Natural killer cell (primary cell): ENCODE measurements at regions of chr9 and their contacts with region 1.

Region 1: GRCh38 chr9:121059998-121060636 is 10.0 kb upstream of the C5 start:
- DNase-seq: peak in 1 of 2 donors; percentile 77
- ATAC-seq: peak in 2 of 3 donors; percentile 44 to 57
- H3K4me3 ChIP-seq: no peak overlapping the region
- H3K4me3 Mint-ChIP-seq: no peak overlapping the region
- H3K27ac ChIP-seq: no peak overlapping the region
- H3K27ac Mint-ChIP-seq: no peak overlapping the region
- H3K4me1 ChIP-seq: no peaks in the 10 kb centered on the region
- H3K4me1 Mint-ChIP-seq: no peaks in the 10 kb centered on the region
- H3K27me3 ChIP-seq: no peaks in the 10 kb centered on the region
- H3K27me3 Mint-ChIP-seq: peaks cover 0 to 3% of the 10 kb centered on the region in 2 donors
- CTCF ChIP-seq: peak; percentile 76

Region 2: GRCh38 chr9:120755827-120756434 is 304.2 kb before region 1 on chr9:
- intact Hi-C with region 1: loop called (anchors 1 kb)
- DNase-seq: peak; percentile 51 to 85
- ATAC-seq: peak; percentile 69 to 85 (median 74)
- H3K4me3 ChIP-seq: no peak overlapping the region
- H3K4me3 Mint-ChIP-seq: no peak overlapping the region
- H3K27ac ChIP-seq: no peak overlapping the region
- H3K27ac Mint-ChIP-seq: peak overlapping the region in 1 of 2 donors; percentile 36
- H3K4me1 ChIP-seq: no peaks in the 10 kb centered on the region
- H3K4me1 Mint-ChIP-seq: peaks cover 0 to 5% of the 10 kb centered on the region in 2 donors
- H3K27me3 ChIP-seq: no peaks in the 10 kb centered on the region
- H3K27me3 Mint-ChIP-seq: no peaks in the 10 kb centered on the region
- CTCF ChIP-seq: peak; percentile 93

Region 3: GRCh38 chr9:120904061-120904977 is 155.8 kb before region 1 on chr9:
- intact Hi-C with region 1: no loop called
- DNase-seq: peak in 1 of 2 donors; percentile 90
- ATAC-seq: peak; percentile 43 to 58 (median 50)
- H3K4me3 ChIP-seq: no peak overlapping the region
- H3K4me3 Mint-ChIP-seq: no peak overlapping the region
- H3K27ac ChIP-seq: peak overlapping the region; percentile 58
- H3K27ac Mint-ChIP-seq: peak overlapping the region; percentile 43 to 59
- H3K4me1 ChIP-seq: peaks cover 56% of the 10 kb centered on the region
- H3K4me1 Mint-ChIP-seq: peaks cover 16 to 34% of the 10 kb centered on the region in 2 donors
- H3K27me3 ChIP-seq: no peaks in the 10 kb centered on the region
- H3K27me3 Mint-ChIP-seq: no peaks in the 10 kb centered on the region
- CTCF ChIP-seq: no peak

Region 4: DNA sequence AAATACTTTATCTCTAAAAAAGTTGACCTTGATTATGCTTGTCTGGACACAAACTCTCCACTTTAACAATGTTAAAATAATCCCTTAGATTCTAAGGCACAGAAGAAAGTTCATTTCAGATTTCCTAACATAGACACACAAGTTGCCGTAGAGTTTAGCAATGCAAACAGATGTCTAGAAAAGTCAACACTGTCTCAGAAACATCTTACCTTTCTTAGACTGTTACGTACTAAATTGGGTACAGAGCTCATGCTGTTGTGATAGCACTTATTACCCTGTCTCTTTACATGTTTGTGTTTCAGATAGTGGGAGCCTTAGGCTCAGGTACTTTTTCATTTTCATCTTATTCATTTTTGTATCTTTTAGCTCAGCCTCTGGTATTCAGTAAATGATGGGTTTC is 62.0 kb before region 1 on chr9:
- intact Hi-C with region 1: no loop called
- DNase-seq: no peak
- ATAC-seq: no peak
- H3K4me3 ChIP-seq: no peak overlapping the region
- H3K4me3 Mint-ChIP-seq: no peak overlapping the region
- H3K27ac ChIP-seq: no peak overlapping the region
- H3K27ac Mint-ChIP-seq: no peak overlapping the region
- H3K4me1 ChIP-seq: no peaks in the 10 kb centered on the region
- H3K4me1 Mint-ChIP-seq: no peaks in the 10 kb centered on the region
- H3K27me3 ChIP-seq: no peaks in the 10 kb centered on the region
- H3K27me3 Mint-ChIP-seq: no peaks in the 10 kb centered on the region
- CTCF ChIP-seq: no peak

Region 5: DNA sequence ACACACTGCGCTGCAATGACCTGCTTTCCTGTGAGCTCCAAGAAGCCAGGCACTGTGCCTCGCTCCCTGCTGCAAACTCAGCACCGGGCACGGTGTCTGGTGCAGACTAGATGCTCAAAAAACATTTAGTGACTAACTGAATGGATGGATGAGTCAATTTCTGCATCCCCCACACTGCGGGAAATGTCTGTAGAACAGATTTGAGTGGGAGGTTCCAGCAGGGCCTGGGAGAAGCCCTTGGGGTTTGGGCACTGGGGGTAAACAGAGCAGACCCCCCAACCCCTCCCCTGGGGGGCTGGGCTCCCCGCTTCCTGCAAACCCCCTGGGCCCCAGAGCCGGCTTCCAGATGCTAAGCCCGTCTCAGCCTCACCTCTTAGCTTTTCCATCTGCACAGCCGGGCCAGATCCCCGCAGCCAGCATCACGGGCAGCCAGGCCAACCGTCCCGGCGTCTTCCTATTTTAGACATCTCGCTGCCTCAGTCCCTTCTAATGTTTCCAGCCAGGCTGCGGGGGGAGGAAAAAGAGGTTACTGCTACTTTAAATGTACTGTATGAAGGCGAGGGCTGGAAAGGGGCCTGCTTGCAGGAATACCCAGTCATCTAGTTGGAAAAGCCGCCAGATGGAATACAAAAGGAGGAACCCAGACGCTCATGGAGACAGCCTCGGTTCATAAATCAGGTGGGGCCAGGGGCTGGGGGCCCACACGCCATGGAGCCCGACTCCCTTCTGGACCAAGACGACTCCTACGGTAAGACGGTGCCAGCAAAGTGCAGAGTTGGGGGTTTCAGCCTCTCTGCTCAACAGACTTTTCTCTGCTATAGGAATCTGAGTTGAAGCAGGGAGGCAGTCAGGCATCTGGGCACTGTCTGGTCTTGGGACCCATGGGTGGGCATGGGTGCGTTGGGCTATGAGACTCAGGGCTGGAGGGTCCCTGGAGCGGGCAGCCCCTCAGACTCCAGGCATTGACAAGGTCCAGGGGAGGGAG is 506.7 kb after region 1 on chr9:
- intact Hi-C with region 1: no loop called
- DNase-seq: no peak
- ATAC-seq: no peak
- H3K4me3 ChIP-seq: no peak overlapping the region
- H3K4me3 Mint-ChIP-seq: no peak overlapping the region
- H3K27ac ChIP-seq: no peak overlapping the region
- H3K27ac Mint-ChIP-seq: no peak overlapping the region
- H3K4me1 ChIP-seq: no peaks in the 10 kb centered on the region
- H3K4me1 Mint-ChIP-seq: peaks cover 0 to 14% of the 10 kb centered on the region in 2 donors
- H3K27me3 ChIP-seq: no peaks in the 10 kb centered on the region
- H3K27me3 Mint-ChIP-seq: peaks cover 0 to 7% of the 10 kb centered on the region in 2 donors
- CTCF ChIP-seq: no peak